ENCODE measurements at regions of chr16 and their contacts with region 1.

Region 1: GRCh38 chr16:9090960-9091866 is at the start of gene HAPSTR1:
- DNase-seq: peak; percentile 100
- ATAC-seq: peak; percentile 93 to 97 (median 96)
- H3K4me3 ChIP-seq: peak within 1 kb of the TSS; percentile 80 to 98 (median 94)
- H3K27ac ChIP-seq: peak within 1 kb of the TSS; percentile 96 to 100 (median 99)
- H3K4me1 ChIP-seq: peaks cover 14 to 47% (median 40%) of the 10 kb centered on the region in 9 donors
- H3K27me3 ChIP-seq: no peaks in the 10 kb centered on the region
- CTCF ChIP-seq: no peak
- total RNA-seq, gene HAPSTR1: 57.2 to 74.7 (median 64.1) TPM

Region 2: DNA sequence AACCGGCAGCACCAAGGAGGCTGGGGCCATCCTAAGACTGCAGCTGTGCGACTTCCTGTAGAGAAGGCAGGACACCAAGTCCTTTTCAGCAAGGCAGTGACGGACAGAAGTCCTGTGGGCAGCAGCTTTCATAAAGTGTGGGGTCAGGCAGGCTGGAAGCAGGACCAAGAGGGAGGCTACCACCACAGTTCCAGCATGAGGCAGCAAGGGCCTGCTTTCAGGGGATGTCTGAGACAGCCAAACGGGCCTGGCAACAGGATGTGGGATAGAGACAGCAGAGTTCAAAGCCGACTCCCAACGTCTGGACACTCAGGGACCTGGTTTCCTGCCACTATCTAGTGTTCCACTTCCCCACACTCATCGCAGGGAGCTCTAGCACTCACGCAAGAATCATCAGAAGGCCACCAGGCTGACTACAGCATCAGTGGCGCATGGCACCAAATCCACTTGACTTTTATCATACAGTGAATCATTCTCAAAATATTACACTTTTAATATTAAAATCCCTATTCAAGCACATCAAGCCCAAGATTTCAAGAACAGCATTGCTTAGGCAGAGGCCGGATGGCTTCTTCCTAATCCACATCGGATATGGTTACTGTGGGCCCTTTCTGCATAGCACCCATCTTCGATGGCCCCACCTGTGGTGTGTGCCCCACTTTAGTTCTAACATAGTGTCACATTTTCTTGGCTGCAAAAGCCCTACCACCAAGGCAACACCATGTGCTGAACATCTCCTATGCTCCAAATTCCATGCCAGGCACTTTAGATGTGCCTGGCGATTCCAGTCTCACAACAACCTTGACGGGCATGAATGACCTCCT is 132.7 kb before region 1 on chr16:
- intact Hi-C with region 1: loop called in 5 of 10 experiments (anchors 5 to 10 kb)
- DNase-seq: no peak
- ATAC-seq: peak; percentile 21 to 65 (median 48)
- H3K4me3 ChIP-seq: peak overlapping the region in 4 of 10 donors; percentile 1 to 13 (median 8)
- H3K27ac ChIP-seq: peak overlapping the region in 8 of 10 donors; percentile 9 to 87 (median 40)
- H3K4me1 ChIP-seq: peaks cover 31 to 83% (median 76%) of the 10 kb centered on the region in 9 donors
- H3K27me3 ChIP-seq: no peaks in the 10 kb centered on the region
- CTCF ChIP-seq: no peak

Region 3: GRCh38 chr16:9027070-9027795 is 64.0 kb before region 1 on chr16:
- intact Hi-C with region 1: no loop called
- DNase-seq: no peak
- ATAC-seq: no peak
- H3K4me3 ChIP-seq: no peak overlapping the region
- H3K27ac ChIP-seq: no peak overlapping the region
- H3K4me1 ChIP-seq: no peaks in the 10 kb centered on the region
- H3K27me3 ChIP-seq: no peaks in the 10 kb centered on the region
- CTCF ChIP-seq: no peak

Region 4: GRCh38 chr16:9047686-9048301 is 43.4 kb before region 1 on chr16:
- intact Hi-C with region 1: loop called in 2 of 10 experiments (anchors 2 to 5 kb)
- DNase-seq: peak; percentile 83 to 89
- ATAC-seq: peak; percentile 94 to 100 (median 99)
- H3K4me3 ChIP-seq: no peak overlapping the region
- H3K27ac ChIP-seq: peak overlapping the region; percentile 68 to 90 (median 80)
- H3K4me1 ChIP-seq: peaks cover 5 to 20% (median 14%) of the 10 kb centered on the region in 9 donors
- H3K27me3 ChIP-seq: no peaks in the 10 kb centered on the region
- CTCF ChIP-seq: no peak